Panc1 (cell line): ENCODE measurements at regions of chr6 and their contacts with region 1.

Region 1: DNA sequence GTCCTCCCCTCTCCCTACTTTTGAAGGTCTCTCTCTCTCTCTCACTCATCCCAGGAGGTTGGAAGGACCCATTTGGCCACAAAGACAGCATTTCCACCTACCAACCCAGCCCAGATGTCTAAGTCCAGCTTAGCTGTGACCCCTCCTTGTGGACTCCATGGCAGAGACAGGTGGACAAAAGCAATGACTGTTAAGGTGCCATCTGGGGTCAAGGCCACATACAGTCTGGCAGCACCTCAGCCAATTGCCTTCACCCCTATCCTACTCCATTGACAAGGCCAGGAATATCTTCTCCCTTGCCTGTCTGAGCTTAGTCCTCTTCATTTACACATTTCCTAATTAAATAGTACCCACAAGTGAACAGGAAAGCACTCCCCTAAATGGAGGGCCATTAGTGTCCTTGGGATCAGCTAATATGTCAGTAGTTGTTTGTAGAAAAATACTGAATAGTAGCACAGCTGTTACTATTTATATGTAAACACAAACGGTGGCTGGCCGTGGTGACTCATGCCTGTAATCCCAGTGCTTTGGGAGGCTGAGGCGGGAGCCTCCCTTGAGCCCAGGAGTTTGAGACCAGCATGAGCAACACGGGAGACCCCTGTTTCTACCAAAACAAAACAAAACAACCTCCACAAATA is 28.8 kb downstream of the GCM1 start:
- DNase-seq: peak; percentile 22
- ATAC-seq: peak; percentile 84
- H3K4me3 ChIP-seq: no peak overlapping the region
- H3K27ac ChIP-seq: no peak overlapping the region
- H3K4me1 ChIP-seq: peaks cover 4% of the 10 kb centered on the region; the same call in 1 of the 2 replicates
- H3K27me3 ChIP-seq: no peaks in the 10 kb centered on the region
- CTCF ChIP-seq: no peak

Region 2: GRCh38 chr6:53064726-53065215 is 55.1 kb before region 1 on chr6:
- CTCF ChIA-PET with region 1: no interaction called
- POLR2A ChIA-PET with region 1: interaction called, 11 read pairs
- in situ Hi-C with region 1: no loop called
- intact Hi-C with region 1: no loop called
- DNase-seq: peak; percentile 95
- ATAC-seq: peak; percentile 88
- H3K4me3 ChIP-seq: peak overlapping the region; percentile 69 to 84
- H3K27ac ChIP-seq: peak overlapping the region; percentile 90
- H3K4me1 ChIP-seq: peaks cover 20% of the 10 kb centered on the region
- H3K27me3 ChIP-seq: no peaks in the 10 kb centered on the region
- CTCF ChIP-seq: no peak